Heart right ventricle (tissue), 16 donors: ENCODE measurements at regions of chr19 and their contacts with region 1.

Region 1: DNA sequence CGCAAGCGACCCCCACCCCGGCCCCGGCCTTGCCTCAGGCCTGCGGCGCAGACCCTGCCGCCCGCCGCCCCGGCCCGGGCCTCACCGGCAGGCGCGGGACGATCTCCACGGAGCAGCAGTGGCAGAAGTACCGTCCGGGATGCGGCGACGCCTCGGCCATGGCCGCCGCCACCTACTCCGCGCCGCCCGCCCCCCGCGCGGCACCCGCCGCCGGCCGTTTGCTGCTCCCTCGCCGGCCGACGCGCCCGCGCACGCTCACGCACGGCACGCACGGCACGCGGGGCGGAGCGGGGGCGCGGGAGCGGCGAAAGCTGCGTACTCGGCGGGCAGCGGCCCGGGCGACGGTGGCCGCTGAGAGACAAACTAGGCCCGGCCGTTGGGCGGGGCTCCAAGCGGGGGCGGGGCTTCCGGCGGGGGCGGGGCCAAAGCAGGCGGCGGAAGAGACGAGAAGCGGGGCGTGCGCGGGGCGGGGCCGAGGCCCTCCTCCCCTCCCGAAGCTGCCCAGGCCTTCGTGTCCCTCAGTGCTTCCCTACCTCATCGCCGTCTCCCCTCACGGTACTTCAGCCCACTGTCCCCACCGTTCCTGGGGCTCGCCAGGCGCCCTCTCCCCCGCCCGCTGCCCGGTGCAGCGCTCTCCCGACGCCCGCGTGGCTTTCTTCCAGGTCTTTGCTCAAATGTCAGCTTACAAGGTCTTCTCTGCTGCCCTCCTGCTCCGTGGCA is at the start of gene RNF126:
- DNase-seq: peak; percentile 91 to 97
- ATAC-seq: peak; percentile 80 to 88 (median 86)
- H3K4me3 ChIP-seq: peak within 1 kb of the TSS; percentile 87 to 100 (median 97)
- H3K27ac ChIP-seq: peak within 1 kb of the TSS; percentile 61 to 97 (median 94)
- H3K4me1 ChIP-seq: peaks cover 32 to 62% (median 56%) of the 10 kb centered on the region in 9 donors
- H3K27me3 ChIP-seq: no peaks in the 10 kb centered on the region
- CTCF ChIP-seq: no peak
- total RNA-seq, gene RNF126: 20.3 to 43.6 (median 22.5) TPM

Region 2: DNA sequence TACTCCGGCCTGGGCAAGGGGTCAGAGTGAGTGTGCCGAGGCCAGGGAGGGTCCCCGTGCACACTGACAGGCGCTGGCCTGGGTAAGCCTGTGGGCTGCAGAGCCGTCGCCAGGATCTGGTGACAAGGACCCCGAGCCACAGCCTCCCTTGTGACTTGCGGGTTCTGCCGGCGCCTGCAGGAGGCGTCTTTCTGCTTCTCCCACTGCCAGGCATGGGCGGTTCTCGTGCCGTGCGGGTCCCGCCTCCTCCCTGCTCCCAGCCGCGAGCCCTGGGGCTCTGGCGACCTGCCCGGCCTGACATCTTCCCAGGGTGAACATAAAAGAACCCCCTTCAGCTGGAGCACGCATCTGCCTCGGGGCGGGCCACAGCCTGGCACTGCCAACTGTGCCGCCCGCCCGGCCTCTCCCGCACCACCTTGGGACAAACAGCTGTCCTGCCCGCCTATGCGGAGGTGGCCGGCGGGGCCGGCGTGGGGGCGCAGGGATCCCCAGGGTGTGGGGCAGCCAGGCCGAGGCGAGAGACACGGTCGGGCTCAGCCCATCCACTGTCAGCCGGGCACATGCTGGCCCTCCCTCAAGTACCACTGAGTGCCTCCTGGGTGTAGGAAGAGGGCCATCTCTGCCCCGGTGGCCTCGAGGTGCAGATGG is 74.9 kb before region 1 on chr19:
- intact Hi-C with region 1: loop called in 1 of 10 experiments (anchors 5 kb)
- DNase-seq: peak; percentile 69 to 75
- ATAC-seq: peak; percentile 5 to 63 (median 22)
- H3K4me3 ChIP-seq: peak overlapping the region in 3 of 10 donors; percentile 12 to 14 (median 13)
- H3K27ac ChIP-seq: peak overlapping the region in 3 of 10 donors; percentile 5 to 56 (median 34)
- H3K4me1 ChIP-seq: peaks cover 4 to 42% (median 23%) of the 10 kb centered on the region in 9 donors
- H3K27me3 ChIP-seq: peaks cover 27 to 53% (median 50%) of the 10 kb centered on the region in 7 donors
- CTCF ChIP-seq: peak; percentile 20 to 64 (median 49)

Region 3: DNA sequence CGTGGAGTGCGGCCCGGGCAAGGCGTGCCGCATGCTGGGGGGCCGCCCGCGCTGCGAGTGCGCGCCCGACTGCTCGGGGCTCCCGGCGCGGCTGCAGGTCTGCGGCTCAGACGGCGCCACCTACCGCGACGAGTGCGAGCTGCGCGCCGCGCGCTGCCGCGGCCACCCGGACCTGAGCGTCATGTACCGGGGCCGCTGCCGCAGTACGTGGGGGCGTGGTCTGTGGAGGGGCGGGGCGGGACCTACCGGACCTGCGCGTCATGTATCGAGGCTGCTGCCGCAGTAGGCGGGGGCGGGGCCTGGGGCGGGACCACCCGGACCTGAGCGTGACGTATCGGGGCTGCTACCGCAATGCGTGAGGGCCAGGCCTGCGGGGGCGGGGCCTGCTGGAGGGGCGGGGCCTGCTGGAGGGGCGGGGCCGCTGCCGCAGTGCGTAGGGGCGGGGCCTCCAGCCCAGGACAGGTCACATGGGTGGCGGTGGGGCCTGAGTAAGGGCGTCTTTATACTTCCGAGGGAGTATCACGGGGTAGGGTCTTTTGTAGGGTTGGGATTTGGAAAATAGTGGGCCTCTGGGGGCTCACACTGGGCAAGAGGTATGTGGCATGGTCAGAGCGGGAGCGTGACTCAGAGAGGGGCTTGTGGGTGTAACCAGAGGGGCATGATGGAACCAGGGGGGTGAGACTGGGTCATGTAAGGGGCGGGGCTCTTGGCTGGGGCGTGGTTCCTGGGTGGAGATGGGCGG is 17.3 kb after region 1 on chr19:
- intact Hi-C with region 1: loop called in 1 of 10 experiments (anchors 2 kb)
- DNase-seq: peak; percentile 99 to 100
- ATAC-seq: peak; percentile 82 to 91 (median 88)
- H3K4me3 ChIP-seq: peak overlapping the region; percentile 49 to 87 (median 76)
- H3K27ac ChIP-seq: peak overlapping the region; percentile 84 to 99 (median 97)
- H3K4me1 ChIP-seq: peaks cover 10 to 43% (median 33%) of the 10 kb centered on the region in 9 donors
- H3K27me3 ChIP-seq: peaks cover 0 to 20% (median 0%) of the 10 kb centered on the region in 7 donors
- CTCF ChIP-seq: peak in 8 of 9 donors; percentile 27 to 68 (median 52)

Region 4: DNA sequence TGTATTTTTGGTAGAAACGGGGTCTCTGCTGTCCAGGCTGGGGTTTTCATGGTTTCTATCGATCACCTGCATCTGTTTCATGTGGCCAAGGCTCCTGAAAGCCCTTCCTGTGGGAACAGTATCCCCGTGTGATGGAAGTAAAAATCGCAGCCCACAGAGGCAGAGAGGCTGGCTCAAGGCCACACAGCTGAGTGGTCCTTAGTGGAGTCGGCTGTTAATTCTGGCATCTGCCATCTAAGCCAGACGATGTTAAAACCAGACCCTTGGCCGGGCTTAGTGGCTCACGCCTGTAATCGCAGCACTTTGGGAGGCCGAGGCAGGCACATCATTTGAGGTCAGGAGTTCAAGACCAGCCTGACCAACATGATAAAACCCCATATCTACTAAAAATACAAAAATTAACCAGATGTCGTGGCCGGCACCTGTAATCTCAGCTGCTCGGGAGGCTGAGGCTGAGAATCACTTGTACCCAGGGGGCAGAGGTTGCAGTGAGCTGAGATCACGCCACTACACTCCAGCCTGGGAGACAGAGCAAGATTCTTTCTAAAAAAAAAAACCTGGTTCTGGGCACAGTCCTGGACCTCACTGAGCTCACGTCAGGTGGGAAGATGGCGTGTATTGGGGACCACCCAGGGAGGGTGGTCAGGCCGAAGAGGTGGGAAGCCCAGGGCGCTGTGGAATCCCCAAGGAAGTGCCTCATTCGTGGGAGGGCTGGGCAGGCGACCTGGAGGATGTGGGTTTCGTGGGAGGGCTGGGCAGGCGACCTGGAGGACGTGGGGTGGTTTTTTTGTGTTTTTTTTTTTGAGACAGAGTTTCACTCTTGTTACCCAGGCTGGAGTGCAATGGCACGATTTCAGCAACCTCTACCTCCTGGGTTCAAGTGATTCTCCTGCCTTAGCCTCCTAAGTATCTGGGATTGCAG is 69.3 kb after region 1 on chr19:
- intact Hi-C with region 1: loop called (anchors 1 to 2 kb)
- DNase-seq: no peak
- ATAC-seq: no peak
- H3K4me3 ChIP-seq: no peak overlapping the region
- H3K27ac ChIP-seq: no peak overlapping the region
- H3K4me1 ChIP-seq: peaks cover 0 to 33% (median 12%) of the 10 kb centered on the region in 9 donors
- H3K27me3 ChIP-seq: no peaks in the 10 kb centered on the region
- CTCF ChIP-seq: no peak

Region 5: GRCh38 chr19:737581-738093 is 74.5 kb after region 1 on chr19:
- intact Hi-C with region 1: loop called (anchors 1 to 2 kb)
- DNase-seq: peak in 1 of 2 donors; percentile 59
- ATAC-seq: peak in 7 of 8 donors; percentile 16 to 48 (median 40)
- H3K4me3 ChIP-seq: no peak overlapping the region
- H3K27ac ChIP-seq: no peak overlapping the region
- H3K4me1 ChIP-seq: peaks cover 0 to 9% (median 0%) of the 10 kb centered on the region in 9 donors
- H3K27me3 ChIP-seq: no peaks in the 10 kb centered on the region
- CTCF ChIP-seq: peak; percentile 29 to 68 (median 58)

Region 6: GRCh38 chr19:1103708-1104310 is 440.7 kb after region 1 on chr19 and contains the start of gene GPX4:
- intact Hi-C with region 1: no loop called
- DNase-seq: peak; percentile 99
- ATAC-seq: peak; percentile 82 to 92 (median 90)
- H3K4me3 ChIP-seq: peak within 1 kb of the TSS; percentile 40 to 96 (median 82)
- H3K27ac ChIP-seq: peak within 1 kb of the TSS; percentile 88 to 100 (median 98)
- H3K4me1 ChIP-seq: peaks cover 30 to 78% (median 66%) of the 10 kb centered on the region in 9 donors
- H3K27me3 ChIP-seq: no peaks in the 10 kb centered on the region
- CTCF ChIP-seq: no peak
- total RNA-seq, gene GPX4: 244 to 405 (median 299) TPM